ENCODE measurements at regions of chr4 and their contacts with region 1.

Region 1: DNA sequence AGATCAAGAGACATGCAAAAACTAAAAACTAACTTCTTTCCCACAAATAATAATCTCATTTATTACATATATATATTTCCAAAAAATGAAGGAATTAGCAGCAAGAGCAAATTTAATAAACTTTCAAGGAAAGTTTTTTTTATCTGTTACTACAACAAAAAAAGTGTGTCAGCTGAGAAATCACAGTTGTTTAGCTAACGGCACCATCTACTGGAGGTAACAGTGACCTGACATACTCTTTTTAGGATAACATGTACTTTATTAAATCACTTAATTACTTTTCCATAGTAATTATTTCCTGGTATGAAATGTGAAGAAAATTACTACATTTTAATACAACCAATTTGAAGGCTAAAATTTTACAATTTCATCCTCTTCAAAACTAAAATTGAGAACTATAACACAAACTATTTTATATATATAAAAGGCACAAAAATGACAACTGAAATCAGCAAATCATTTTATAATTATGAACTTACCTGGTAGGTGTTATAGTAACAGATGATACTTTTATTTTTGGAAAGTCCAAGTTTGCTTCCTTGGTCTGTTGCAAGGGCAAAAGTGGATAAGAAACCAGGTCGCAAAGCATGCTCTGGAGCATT is 9.1 kb downstream of the LAMTOR3 start:
- DNase-seq: no peak
- H3K4me3 ChIP-seq: no peak overlapping the region
- H3K27ac ChIP-seq: no peak overlapping the region
- H3K4me1 ChIP-seq: no peaks in the 10 kb centered on the region
- H3K27me3 ChIP-seq: no peaks in the 10 kb centered on the region
- CTCF ChIP-seq: peak; percentile 73

Region 2: GRCh38 chr4:99808260-99808857 is 76.8 kb before region 1 on chr4:
- CTCF ChIA-PET with region 1: no interaction called
- POLR2A ChIA-PET with region 1: no interaction called
- intact Hi-C with region 1: loop called (anchors 2 kb)
- DNase-seq: peak; percentile 44 to 62
- H3K4me3 ChIP-seq: no peak overlapping the region
- H3K27ac ChIP-seq: no peak overlapping the region
- H3K4me1 ChIP-seq: no peaks in the 10 kb centered on the region
- H3K27me3 ChIP-seq: no peaks in the 10 kb centered on the region
- CTCF ChIP-seq: peak; percentile 88

Measured in PC-9 (cell line).